ENCODE measurements at regions of chr19 and their contacts with region 1.

Region 1: GRCh38 chr19:11798391-11799330 is at the start of gene ZNF491:
- DNase-seq: no peak
- ATAC-seq: peak; percentile 99
- H3K4me3 ChIP-seq: peak within 1 kb of the TSS; percentile 78
- H3K27ac ChIP-seq: peak within 1 kb of the TSS; percentile 27
- H3K4me1 ChIP-seq: peaks cover 7% of the 10 kb centered on the region
- H3K27me3 ChIP-seq: no peaks in the 10 kb centered on the region
- CTCF ChIP-seq: peak; percentile 17 to 29 (median 22); a peak in 3 of 6 replicates
- EP300 ChIP-seq: no peak
- POLR2A ChIP-seq: peak; percentile 84
- RAD21 ChIP-seq: no peak
- polyA plus RNA-seq, gene ZNF491: 0.18 to 0.49 TPM

Region 2: GRCh38 chr19:11738746-11739620 is 59.7 kb before region 1 on chr19 and contains the start of gene ZNF823:
- CTCF ChIA-PET with region 1: interaction called, 12 read pairs
- POLR2A ChIA-PET with region 1: no interaction called
- RAD21 ChIA-PET with region 1: interaction called, 10 read pairs
- SMC1A ChIA-PET with region 1: interaction called, 3 read pairs
- in situ Hi-C with region 1: no loop called
- intact Hi-C with region 1: no loop called
- DNase-seq: peak; percentile 95
- ATAC-seq: peak; percentile 97
- H3K4me3 ChIP-seq: peak within 1 kb of the TSS; percentile 82
- H3K27ac ChIP-seq: peak within 1 kb of the TSS; percentile 83
- H3K4me1 ChIP-seq: no peaks in the 10 kb centered on the region; the same call in 1 of the 2 replicates
- H3K27me3 ChIP-seq: no peaks in the 10 kb centered on the region
- CTCF ChIP-seq: no peak
- EP300 ChIP-seq: no peak
- POLR2A ChIP-seq: peak; percentile 81
- RAD21 ChIP-seq: no peak
- polyA plus RNA-seq, gene ZNF823: 3.3 TPM

Region 3: GRCh38 chr19:11814029-11814699 is 15.5 kb after region 1 on chr19 and contains the start of gene ZNF440:
- CTCF ChIA-PET with region 1: interaction called, 74 read pairs
- POLR2A ChIA-PET with region 1: interaction called, 5 read pairs
- RAD21 ChIA-PET with region 1: interaction called, 27 read pairs
- SMC1A ChIA-PET with region 1: interaction called, 24 read pairs
- in situ Hi-C with region 1: no loop called
- intact Hi-C with region 1: no loop called
- DNase-seq: peak; percentile 72
- ATAC-seq: peak; percentile 100
- H3K4me3 ChIP-seq: peak within 1 kb of the TSS; percentile 81
- H3K27ac ChIP-seq: peak within 1 kb of the TSS; percentile 84
- H3K4me1 ChIP-seq: peaks cover 7% of the 10 kb centered on the region
- H3K27me3 ChIP-seq: no peaks in the 10 kb centered on the region
- CTCF ChIP-seq: no peak
- EP300 ChIP-seq: no peak
- POLR2A ChIP-seq: peak; percentile 96
- RAD21 ChIP-seq: no peak
- polyA plus RNA-seq, gene ZNF440: 1.3 to 2.1 TPM

Region 4: DNA sequence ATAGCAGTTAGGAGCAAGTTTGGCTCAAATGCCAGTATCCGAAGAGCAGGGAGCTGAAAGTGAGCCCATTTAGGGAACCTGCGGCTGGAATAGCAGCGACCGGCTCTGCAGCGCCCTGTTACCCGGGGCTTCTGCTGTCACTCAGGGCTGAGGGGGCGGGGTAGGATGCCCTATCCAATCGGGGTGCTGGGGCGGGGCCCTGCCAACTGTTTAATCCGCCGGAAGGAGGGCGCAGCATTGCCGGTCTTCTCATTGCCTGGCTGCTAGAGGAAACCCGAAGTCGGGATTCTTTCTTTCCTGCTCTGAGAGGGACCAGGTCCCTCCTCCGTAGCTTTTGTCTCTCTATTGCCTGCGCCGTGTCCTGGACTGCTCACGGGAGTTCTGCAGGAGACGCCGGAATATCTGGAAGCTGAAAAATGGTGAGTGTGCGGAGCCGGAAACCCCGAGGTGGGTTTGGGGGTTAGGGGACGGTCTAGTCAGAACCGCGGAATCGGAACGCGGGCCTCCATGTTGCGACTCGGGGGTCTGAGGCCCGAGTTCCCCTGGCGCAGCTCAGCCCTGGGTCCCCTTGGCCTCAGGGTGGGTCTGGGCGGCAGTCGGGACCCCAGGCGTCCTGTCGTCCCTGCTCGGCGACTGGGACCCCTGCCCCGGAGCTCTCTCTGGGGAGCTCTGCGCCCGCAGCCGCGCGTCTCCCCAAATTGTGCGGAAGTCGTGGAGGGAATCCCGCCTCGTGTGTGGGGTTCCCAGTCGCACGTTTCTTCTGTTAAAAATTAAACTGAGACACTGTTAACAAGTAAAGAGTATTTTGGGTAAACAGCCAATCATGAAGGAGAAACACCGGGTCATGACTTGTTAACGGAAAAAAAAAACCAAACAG is 189.0 kb after region 1 on chr19:
- CTCF ChIA-PET with region 1: interaction called, 26 read pairs
- POLR2A ChIA-PET with region 1: interaction called, 5 read pairs
- RAD21 ChIA-PET with region 1: interaction called, 23 read pairs
- SMC1A ChIA-PET with region 1: interaction called, 14 read pairs
- in situ Hi-C with region 1: no loop called
- intact Hi-C with region 1: no loop called
- DNase-seq: peak; percentile 68
- ATAC-seq: peak; percentile 99
- H3K4me3 ChIP-seq: peak overlapping the region; percentile 96
- H3K27ac ChIP-seq: peak overlapping the region; percentile 82
- H3K4me1 ChIP-seq: no peaks in the 10 kb centered on the region
- H3K27me3 ChIP-seq: no peaks in the 10 kb centered on the region
- CTCF ChIP-seq: no peak
- EP300 ChIP-seq: 0 out of 4 replicates have a peak, but pooled peaks of 1 of the 2 experiments have one; percentile 8
- POLR2A ChIP-seq: peak; percentile 81
- RAD21 ChIP-seq: no peak

Region 5: DNA sequence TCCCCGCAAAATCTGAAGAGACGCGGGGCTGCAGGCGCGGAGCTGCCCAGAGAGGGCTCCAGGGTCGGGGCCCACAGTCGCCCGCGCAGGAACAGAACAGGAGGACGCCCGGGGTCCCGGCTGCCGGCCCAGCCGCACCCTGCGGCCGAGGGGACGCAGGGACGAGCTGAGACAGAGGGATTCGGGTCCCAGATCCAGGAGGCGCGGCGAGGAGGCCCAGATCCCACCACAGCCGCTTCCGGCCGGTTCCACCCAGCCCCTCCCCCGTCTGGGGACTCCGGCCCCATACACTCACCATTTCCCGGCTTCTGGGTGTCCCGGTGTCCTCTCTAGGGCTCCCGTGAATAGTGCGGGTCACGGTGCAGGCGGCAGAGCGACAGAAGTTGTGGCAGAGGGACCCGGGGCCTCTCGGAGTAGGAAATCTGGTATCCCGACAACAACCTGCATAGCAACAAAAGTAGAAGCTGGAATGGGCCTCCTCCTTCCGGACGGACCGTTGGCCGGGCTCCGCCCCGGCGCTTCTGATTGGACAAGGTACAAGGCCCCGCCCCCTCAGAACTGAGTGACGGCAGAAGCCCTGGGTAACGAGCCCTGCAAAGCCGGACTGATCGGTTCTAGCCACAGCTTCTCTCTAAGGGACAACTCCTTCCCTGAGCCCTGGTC is 341.4 kb after region 1 on chr19 and contains the start of gene ZNF20:
- CTCF ChIA-PET with region 1: interaction called, 26 read pairs
- POLR2A ChIA-PET with region 1: no interaction called
- RAD21 ChIA-PET with region 1: interaction called, 25 read pairs
- SMC1A ChIA-PET with region 1: interaction called, 10 read pairs
- in situ Hi-C with region 1: loop called (anchors 5 kb)
- intact Hi-C with region 1: loop called (anchors 1 kb)
- DNase-seq: peak; percentile 67
- ATAC-seq: peak; percentile 99
- H3K4me3 ChIP-seq: peak within 1 kb of the TSS; percentile 96
- H3K27ac ChIP-seq: peak within 1 kb of the TSS; percentile 85
- H3K4me1 ChIP-seq: peaks cover 3% of the 10 kb centered on the region
- H3K27me3 ChIP-seq: no peaks in the 10 kb centered on the region
- CTCF ChIP-seq: no peak
- EP300 ChIP-seq: no peak
- POLR2A ChIP-seq: peak; percentile 54; the same call in 1 of the 2 replicates
- RAD21 ChIP-seq: no peak
- polyA plus RNA-seq, gene ZNF20: 2.5 to 2.8 TPM

Measured in GM12878 (cell line).